ENCODE measurements at regions of chr3 and their contacts with region 1.

Region 1: DNA sequence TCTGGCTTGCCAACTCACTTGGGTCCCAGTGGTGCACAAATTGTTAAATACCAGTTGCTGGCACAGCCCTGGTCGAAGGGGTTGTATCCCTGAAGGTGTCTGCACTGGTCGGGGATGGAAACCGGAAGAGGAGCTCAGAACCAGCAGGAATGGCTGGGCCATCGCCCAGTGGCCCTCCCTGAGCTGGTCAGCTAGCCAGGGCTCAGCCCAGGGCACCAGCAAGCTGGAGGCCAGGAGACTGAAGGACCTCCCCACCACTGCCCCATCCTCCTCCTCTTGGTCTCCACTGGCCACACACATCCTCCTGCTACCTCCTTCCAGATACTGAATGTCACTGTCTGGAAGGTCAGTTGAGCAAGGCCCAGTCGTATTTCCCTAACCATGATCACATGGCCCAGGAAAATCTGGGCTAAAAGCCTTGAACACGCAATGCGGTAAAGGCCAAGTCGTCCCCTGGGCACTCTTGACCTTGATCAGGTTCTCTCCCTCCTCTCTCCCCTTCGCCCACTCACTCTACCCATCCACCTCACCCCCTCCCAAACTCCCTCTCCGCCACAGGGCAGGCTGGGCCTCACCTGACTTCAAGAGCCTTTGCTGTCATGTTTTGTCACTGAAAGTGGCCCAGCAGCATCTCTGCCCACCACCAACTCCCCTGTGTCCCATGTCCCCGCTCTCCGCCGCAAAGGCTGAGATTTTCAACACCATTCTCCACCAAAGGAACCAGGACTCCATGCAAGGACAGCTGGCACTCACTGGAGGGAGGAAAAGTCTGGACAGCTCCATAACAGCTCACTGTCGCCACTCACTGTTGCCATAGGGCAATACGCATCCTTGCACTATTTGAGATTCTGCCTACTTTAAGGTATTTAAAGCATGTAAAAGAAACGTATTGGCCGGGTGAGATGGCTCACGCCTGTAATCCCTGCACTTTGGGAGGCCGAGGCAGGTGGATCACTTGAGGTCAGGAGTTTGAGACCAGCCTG is 12.1 kb downstream of the ZDHHC19 start:
- DNase-seq: no peak
- H3K4me3 ChIP-seq: no peak overlapping the region
- CTCF ChIP-seq: no peak
- POLR2A ChIP-seq: no peak

Region 2: GRCh38 chr3:196081791-196082618 is 117.1 kb before region 1 on chr3 and contains the start of gene TFRC:
- intact Hi-C with region 1: loop called (anchors 5 kb)
- DNase-seq: peak; percentile 88 to 97
- H3K4me3 ChIP-seq: peak within 1 kb of the TSS; percentile 96
- CTCF ChIP-seq: no peak
- POLR2A ChIP-seq: peak in 1 of 2 donors; percentile 77
- total RNA-seq, gene TFRC: 48.3 to 73.5 (median 59.6) TPM